Endothelial cell of umbilical vein (primary cell): ENCODE measurements at regions of chr5 and their contacts with region 1.

Region 1: GRCh38 chr5:176388444-176389134 is at the starts of genes HIGD2A and NOP16:
- DNase-seq: peak; percentile 98
- H3K4me3 ChIP-seq: peak within 1 kb of the TSS; percentile 64 to 85 (median 65)
- H3K27ac ChIP-seq: peak within 1 kb of the TSS; percentile 79
- H3K4me1 ChIP-seq: peaks cover 14% of the 10 kb centered on the region
- H3K27me3 ChIP-seq: no peaks in the 10 kb centered on the region
- CTCF ChIP-seq: no peak
- POLR2A ChIP-seq: peak; percentile 74
- total RNA-seq, gene HIGD2A: 96.2 and 103 TPM in 2 replicates
- total RNA-seq, gene NOP16: 47.4 and 51.6 TPM in 2 replicates

Region 2: DNA sequence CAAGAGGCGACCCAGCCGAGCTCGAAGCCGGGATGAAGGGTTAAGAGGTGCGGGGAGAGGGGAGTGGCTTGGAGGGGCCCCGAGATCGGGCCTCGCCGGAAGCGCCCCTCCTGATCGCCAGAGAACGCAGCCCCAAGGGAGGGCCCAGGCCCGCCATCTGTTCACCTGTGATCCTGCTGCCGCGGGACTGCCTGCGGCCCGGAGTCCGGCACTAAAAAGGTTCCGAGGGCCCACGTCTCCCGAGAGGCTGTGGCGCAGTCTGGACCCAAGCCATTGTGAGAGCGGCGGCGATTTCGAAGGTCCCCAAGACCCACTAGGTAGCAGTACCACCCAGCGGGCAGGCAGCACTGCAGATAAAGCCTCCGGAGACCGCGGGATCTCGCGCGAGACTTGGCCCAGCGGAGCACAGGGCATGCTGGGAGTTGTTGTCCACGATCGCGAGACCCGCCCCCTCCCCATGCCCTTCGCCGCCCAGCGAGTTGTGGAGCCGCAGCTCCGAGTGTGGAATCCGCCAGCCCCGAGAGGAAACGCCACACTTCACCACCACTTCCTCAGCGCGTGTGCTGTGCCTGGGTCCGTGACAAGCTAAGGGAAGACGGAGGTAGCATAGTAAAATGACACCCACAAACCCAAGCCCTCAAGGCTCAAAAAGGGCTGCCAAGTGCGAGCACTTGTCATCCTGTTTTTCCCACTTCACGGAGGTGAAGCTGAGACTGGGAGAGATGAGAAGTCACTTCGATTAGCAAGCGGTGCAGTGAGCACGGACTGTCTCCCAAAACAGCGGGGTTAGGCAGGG is 27.0 kb before region 1 on chr5 and contains the start of gene KIAA1191:
- CTCF ChIA-PET with region 1: no interaction called
- POLR2A ChIA-PET with region 1: no interaction called
- dilution Hi-C with region 1: no loop called
- intact Hi-C with region 1: loop called (anchors 1 kb)
- DNase-seq: peak; percentile 94
- H3K4me3 ChIP-seq: peak within 1 kb of the TSS; percentile 83 to 99 (median 92)
- H3K27ac ChIP-seq: peak within 1 kb of the TSS; percentile 67
- H3K4me1 ChIP-seq: peaks cover 13% of the 10 kb centered on the region
- H3K27me3 ChIP-seq: no peaks in the 10 kb centered on the region
- CTCF ChIP-seq: no peak
- POLR2A ChIP-seq: peak; percentile 98
- total RNA-seq, gene KIAA1191: 116 and 119 TPM in 2 replicates

Region 3: DNA sequence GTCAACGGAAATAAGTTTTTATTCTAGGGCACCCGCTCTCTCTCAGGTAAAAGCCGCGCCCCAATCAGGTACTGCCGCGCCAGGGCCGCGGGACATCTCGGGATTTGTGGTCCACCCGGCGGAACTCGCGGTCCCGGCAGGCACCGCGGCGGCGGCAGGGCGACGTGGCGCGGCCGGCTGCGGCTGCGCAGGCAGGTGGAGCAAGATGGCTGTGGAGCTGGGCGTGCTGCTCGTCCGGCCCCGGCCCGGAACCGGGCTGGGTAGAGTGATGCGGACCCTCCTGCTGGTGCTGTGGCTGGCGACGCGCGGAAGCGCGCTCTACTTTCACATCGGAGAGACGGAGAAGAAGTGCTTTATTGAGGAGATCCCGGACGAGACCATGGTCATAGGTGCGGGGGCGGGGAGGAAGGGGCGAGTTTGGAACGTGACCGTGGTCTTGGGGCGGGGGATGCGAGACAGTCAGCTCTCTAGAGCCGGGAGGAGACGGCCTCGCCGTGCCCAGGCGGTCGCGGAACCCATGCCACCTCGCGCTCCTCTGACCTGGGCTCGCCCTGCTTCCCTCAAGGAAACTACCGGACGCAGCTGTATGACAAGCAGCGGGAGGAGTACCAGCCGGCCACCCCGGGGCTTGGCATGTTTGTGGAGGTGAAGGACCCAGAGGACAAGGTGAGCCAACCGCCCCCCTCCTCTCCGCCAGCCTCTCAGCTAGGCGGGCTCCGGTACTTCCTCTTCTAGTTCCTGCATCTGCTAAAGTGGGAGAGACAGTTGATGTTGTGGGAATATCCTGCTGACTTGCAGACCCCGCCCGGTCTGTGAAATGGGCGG is 1203.6 kb after region 1 on chr5 and contains the start of gene TMED9:
- CTCF ChIA-PET with region 1: no interaction called
- POLR2A ChIA-PET with region 1: no interaction called
- dilution Hi-C with region 1: no loop called
- intact Hi-C with region 1: loop called (anchors 10 kb)
- DNase-seq: peak; percentile 92
- H3K4me3 ChIP-seq: peak within 1 kb of the TSS; percentile 72 to 92 (median 90)
- H3K27ac ChIP-seq: peak within 1 kb of the TSS; percentile 64
- H3K4me1 ChIP-seq: peaks cover 9% of the 10 kb centered on the region
- H3K27me3 ChIP-seq: peaks cover 13 to 33% of the 10 kb centered on the region in 2 experiments
- CTCF ChIP-seq: no peak
- POLR2A ChIP-seq: peak; percentile 96
- total RNA-seq, gene TMED9: 286 and 291 TPM in 2 replicates